ENCODE measurements at regions of chr19 and their contacts with region 1.

Region 1: DNA sequence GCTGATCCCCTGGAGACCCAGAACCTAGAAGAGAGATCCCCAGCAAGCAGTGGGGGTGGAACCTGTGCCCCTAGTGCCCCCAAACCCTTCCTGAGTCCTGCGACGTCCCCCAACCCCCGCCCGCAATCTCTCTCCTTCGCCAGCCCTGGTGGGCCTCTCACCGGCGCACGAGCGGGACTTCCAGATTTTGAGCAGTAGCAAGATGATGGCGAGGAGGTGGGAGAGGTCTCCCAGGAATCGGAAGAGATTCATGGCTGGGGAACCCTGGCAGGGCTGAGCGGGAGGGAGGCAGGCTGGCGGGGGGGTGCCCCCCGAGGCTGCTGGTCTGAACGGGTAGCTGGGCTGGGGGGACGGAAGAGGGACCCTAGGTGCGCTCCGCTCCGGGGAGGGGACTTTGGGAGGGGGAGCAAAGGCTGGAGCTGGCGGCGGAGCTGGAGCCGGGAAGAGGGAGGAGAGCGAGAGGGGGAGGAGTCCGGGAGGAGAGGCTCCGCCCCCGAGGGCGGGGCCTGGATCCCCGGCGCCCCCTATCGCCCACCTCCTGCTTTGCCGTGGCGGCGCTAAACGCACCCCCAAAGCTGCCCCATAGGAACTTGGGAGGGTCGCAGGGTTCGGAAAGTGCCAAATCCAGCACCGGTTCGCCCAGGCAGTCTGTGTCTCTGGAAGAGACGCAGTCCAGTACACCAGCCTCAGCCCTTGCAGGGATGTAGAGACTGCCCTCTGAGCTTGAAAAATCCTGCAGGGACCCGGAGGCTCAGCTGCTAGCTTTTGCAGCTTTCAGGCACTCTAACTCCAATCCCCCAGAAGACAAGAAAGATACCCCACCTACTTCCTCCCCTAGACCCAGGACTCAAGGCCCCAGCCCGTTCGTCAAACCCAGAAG is at the start of gene KDELR1:
- H3K4me3 Mint-ChIP-seq: peak within 1 kb of the TSS; percentile 89
- H3K27ac Mint-ChIP-seq: peak within 1 kb of the TSS; percentile 96
- H3K4me1 Mint-ChIP-seq: peaks cover 48% of the 10 kb centered on the region
- H3K27me3 Mint-ChIP-seq: peaks cover 49% of the 10 kb centered on the region

Region 2: GRCh38 chr19:48321622-48322591 is 69.4 kb before region 1 on chr19:
- intact Hi-C with region 1: loop called (anchors 5 kb)
- H3K4me3 Mint-ChIP-seq: peak overlapping the region; percentile 86
- H3K27ac Mint-ChIP-seq: peak overlapping the region; percentile 94
- H3K4me1 Mint-ChIP-seq: peaks cover 61% of the 10 kb centered on the region
- H3K27me3 Mint-ChIP-seq: peaks cover 4% of the 10 kb centered on the region

Region 3: GRCh38 chr19:48340995-48341394 is 50.4 kb before region 1 on chr19:
- intact Hi-C with region 1: no loop called
- H3K4me3 Mint-ChIP-seq: no peak overlapping the region
- H3K27ac Mint-ChIP-seq: no peak overlapping the region
- H3K4me1 Mint-ChIP-seq: peaks cover 9% of the 10 kb centered on the region
- H3K27me3 Mint-ChIP-seq: no peaks in the 10 kb centered on the region

Region 4: GRCh38 chr19:48363810-48364563 is 27.4 kb before region 1 on chr19 and contains the starts of genes SYNGR4 and TMEM143:
- intact Hi-C with region 1: loop called (anchors 2 kb)
- H3K4me3 Mint-ChIP-seq: peak within 1 kb of the TSS; percentile 78
- H3K27ac Mint-ChIP-seq: peak within 1 kb of the TSS; percentile 95
- H3K4me1 Mint-ChIP-seq: peaks cover 18% of the 10 kb centered on the region
- H3K27me3 Mint-ChIP-seq: no peaks in the 10 kb centered on the region

Region 5: DNA sequence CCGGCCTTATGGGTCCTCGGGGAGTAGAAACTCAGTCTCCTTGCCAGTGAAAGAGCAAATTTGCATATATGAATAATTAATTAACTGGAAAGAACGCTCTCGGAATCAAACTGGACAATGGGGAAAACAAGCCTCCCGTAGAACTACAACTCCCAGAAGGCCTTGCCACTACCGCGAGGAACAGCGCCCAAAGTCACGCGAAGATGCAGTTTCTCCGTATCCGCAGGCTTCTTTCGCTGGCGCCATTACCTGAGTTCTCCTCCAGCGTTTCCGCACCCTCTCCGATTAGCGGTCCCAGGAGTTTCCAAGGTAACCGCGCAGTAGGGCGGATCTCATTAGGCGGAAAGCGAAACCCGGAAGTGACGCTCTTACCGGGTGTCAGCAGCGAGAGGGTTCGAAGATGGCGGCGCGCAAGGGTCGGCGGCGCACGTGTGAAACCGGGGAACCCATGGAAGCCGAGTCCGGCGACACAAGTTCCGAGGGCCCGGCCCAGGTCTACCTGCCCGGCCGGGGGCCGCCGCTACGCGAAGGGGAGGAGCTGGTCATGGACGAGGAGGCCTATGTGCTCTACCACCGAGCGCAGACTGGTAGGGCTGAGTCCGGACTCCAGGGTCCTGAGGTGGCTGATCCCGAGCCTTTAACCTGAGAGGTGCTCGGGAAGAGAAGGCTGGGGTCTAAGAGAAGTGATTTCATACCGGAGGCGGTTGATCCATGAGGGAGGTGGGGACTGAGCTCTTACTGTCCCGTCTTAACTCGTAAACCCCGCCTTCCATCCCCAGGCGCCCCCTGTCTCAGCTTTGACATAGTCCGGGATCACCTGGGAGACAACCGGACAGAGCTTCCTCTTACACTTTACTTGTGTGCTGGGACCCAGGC is 54.5 kb after region 1 on chr19 and contains the start of gene GRWD1:
- intact Hi-C with region 1: loop called (anchors 2 kb)
- H3K4me3 Mint-ChIP-seq: peak within 1 kb of the TSS; percentile 96
- H3K27ac Mint-ChIP-seq: peak within 1 kb of the TSS; percentile 98
- H3K4me1 Mint-ChIP-seq: peaks cover 38% of the 10 kb centered on the region
- H3K27me3 Mint-ChIP-seq: peaks cover 30% of the 10 kb centered on the region

Measured in dendritic cell treated with granulocyte-macrophage colony-stimulating factor and Interleukin-4, amounts not matched to agents 40 ng/mL and 50 ng/mL, for 4 days (primary cell).